Dendritic cell treated with granulocyte-macrophage colony-stimulating factor and Interleukin-4, amounts not matched to agents 40 ng/mL and 50 ng/mL, for 4 days (primary cell): ENCODE measurements at regions of chr18 and their contacts with region 1.

Region 1: GRCh38 chr18:35290073-35290735 is at the start of gene ZSCAN30:
- H3K4me3 Mint-ChIP-seq: peak within 1 kb of the TSS; percentile 96
- H3K27ac Mint-ChIP-seq: peak within 1 kb of the TSS; percentile 90
- H3K4me1 Mint-ChIP-seq: peaks cover 26% of the 10 kb centered on the region
- H3K27me3 Mint-ChIP-seq: no peaks in the 10 kb centered on the region

Region 2: DNA sequence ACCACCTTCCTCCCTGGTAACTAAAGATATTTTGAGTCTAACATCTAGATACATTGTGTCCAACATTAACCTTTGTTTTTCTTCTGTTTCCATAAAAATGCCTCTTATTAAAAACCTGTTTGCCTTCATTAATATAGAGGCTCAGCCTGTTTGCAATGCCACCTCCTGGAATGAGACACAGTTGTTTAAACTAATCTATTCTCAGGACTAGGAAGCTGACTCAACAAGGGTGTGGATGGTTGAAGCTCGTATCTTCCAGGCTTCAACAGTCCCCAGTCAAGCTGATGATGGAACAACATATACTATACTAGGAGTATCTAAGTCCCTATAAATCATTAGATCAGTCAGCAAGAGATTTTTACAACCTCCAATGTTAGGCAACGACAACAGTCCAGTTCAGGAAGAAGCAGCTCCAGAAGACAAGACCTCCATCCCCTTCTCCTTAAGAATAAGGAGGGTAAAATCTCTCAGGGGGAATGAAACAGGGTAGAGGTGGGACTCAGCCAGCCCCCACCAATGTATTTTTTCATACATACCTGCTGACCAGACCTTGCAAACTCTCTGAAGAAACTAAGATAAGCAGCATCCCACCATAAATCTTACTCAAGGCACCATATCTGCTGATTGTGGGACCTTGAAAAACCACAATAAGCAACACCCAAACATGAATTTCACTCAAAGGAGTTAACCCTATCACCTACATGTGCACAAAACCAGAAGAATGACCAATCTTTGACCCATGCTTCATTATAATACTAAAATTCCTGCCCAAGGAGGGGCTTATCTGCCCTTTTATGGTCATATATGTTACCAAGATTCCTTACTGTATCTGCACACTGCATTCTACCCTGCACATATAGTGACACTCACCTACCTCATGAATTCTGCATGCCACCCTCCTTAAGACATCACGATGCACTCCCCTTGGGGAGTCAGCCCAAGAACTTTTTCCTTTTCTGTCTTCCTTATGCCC is 32.6 kb after region 1 on chr18:
- intact Hi-C with region 1: no loop called
- H3K4me3 Mint-ChIP-seq: no peak overlapping the region
- H3K27ac Mint-ChIP-seq: no peak overlapping the region
- H3K4me1 Mint-ChIP-seq: no peaks in the 10 kb centered on the region
- H3K27me3 Mint-ChIP-seq: no peaks in the 10 kb centered on the region

Region 3: DNA sequence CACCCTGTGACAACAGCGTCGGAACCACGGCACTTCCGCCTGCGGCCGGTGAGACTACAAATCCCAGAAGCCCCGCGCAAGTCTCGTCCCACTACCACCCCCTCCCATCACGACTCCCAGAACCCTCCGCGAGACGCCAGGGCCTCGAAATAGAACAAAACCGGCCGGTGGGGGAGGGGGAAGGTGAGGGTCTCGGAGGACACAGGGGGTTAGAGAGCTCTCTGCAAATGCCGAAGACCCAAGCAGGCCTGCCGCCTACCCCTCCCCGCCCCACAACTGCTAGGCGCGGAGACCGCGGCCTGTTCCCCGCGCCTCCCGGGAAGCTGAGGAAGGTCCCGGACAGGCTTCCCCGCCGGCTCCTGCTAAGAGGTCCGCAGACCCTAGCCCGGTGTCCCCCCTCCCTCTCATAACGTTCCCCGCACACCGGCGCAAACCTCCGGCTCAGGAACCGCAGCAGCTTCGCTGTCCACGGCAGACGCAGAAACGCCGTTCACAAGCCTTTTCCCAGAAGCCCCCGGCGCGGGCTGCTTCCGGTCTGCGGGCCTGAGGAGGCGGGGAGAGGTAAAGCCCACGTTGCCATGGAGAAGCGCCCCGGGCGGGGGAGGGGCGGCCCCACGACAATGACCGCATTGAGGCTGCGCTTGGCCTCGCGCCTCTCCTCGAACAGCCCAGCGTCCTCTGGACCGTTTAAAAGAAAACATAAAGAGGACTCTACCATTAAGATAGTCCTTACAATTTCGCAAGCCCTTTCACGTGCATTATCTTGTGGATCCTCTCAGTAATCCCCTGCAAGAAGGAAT is 53.9 kb after region 1 on chr18 and contains the start of gene ZNF24:
- intact Hi-C with region 1: loop called (anchors 1 kb)
- H3K4me3 Mint-ChIP-seq: peak within 1 kb of the TSS; percentile 93
- H3K27ac Mint-ChIP-seq: peak within 1 kb of the TSS; percentile 89
- H3K4me1 Mint-ChIP-seq: peaks cover 49% of the 10 kb centered on the region
- H3K27me3 Mint-ChIP-seq: no peaks in the 10 kb centered on the region

Region 4: GRCh38 chr18:35386600-35387351 is 96.6 kb after region 1 on chr18:
- intact Hi-C with region 1: no loop called
- H3K4me3 Mint-ChIP-seq: no peak overlapping the region
- H3K27ac Mint-ChIP-seq: no peak overlapping the region
- H3K4me1 Mint-ChIP-seq: peaks cover 11% of the 10 kb centered on the region
- H3K27me3 Mint-ChIP-seq: peaks cover 4% of the 10 kb centered on the region